ENCODE measurements at regions of chr12 and their contacts with region 1.

Region 1: GRCh38 chr12:8544295-8544694 is 3.6 kb upstream of the CLEC4E start:
- DNase-seq: peak; percentile 76
- H3K4me3 Mint-ChIP-seq: no peak overlapping the region
- H3K27ac Mint-ChIP-seq: no peak overlapping the region
- H3K4me1 Mint-ChIP-seq: peaks cover 10% of the 10 kb centered on the region
- H3K27me3 Mint-ChIP-seq: peaks cover 30% of the 10 kb centered on the region
- CTCF ChIP-seq: peak; percentile 83

Region 2: DNA sequence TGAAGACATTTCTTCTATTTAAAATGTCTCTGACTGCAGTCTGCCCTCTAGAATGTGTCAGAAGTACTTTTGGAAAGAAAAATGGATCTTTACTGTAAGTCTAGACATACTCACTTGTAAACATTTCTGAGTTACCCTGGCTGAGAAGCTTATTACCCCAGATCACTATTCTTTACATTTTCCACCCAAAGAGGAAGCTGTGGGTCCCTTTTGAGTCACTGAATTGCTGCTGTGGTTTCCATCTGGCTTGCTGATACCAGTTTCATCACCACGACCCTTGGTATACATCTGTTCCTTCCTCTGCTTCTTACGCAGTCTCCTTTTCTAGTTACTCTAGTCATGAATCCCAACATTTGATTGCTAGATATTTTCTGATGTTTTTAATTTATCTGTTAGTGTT is 51.2 kb before region 1 on chr12:
- CTCF ChIA-PET with region 1: no interaction called
- intact Hi-C with region 1: no loop called
- DNase-seq: no peak
- H3K4me3 Mint-ChIP-seq: no peak overlapping the region
- H3K27ac Mint-ChIP-seq: no peak overlapping the region
- H3K4me1 Mint-ChIP-seq: no peaks in the 10 kb centered on the region
- H3K27me3 Mint-ChIP-seq: peaks cover 27% of the 10 kb centered on the region
- CTCF ChIP-seq: no peak

Region 3: DNA sequence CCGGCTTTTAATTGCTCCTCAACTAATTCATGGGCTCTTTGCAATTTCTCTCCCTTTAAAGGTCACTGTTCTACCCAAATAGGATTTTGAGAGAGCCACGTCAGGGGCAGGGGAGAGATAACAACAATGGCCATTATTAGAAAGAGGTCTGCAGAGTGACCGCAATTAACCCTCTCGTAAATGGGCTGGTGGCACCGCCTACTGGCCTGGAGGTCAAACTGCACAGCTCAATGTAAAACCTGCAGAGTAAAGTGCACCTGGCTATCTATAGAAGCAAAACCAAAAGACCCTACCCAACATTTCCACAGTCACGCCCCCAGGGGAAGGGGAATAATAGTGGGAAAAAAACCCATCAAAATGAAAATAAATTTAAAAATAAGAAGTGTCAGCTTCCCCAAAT is 18.0 kb after region 1 on chr12:
- CTCF ChIA-PET with region 1: no interaction called
- intact Hi-C with region 1: no loop called
- DNase-seq: no peak
- H3K4me3 Mint-ChIP-seq: no peak overlapping the region
- H3K27ac Mint-ChIP-seq: no peak overlapping the region
- H3K4me1 Mint-ChIP-seq: no peaks in the 10 kb centered on the region
- H3K27me3 Mint-ChIP-seq: peaks cover 12% of the 10 kb centered on the region
- CTCF ChIP-seq: no peak

Region 4: GRCh38 chr12:8609061-8609570 is 64.8 kb after region 1 on chr12:
- CTCF ChIA-PET with region 1: interaction called, 31 read pairs
- intact Hi-C with region 1: loop called (anchors 1 kb)
- DNase-seq: peak; percentile 39
- H3K4me3 Mint-ChIP-seq: no peak overlapping the region
- H3K27ac Mint-ChIP-seq: no peak overlapping the region
- H3K4me1 Mint-ChIP-seq: peaks cover 13% of the 10 kb centered on the region
- H3K27me3 Mint-ChIP-seq: peaks cover 18% of the 10 kb centered on the region
- CTCF ChIP-seq: peak; percentile 54

Region 5: GRCh38 chr12:8770499-8770898 is 226.2 kb after region 1 on chr12:
- CTCF ChIA-PET with region 1: no interaction called
- intact Hi-C with region 1: no loop called
- DNase-seq: no peak
- H3K4me3 Mint-ChIP-seq: no peak overlapping the region
- H3K27ac Mint-ChIP-seq: no peak overlapping the region
- H3K4me1 Mint-ChIP-seq: no peaks in the 10 kb centered on the region
- H3K27me3 Mint-ChIP-seq: no peaks in the 10 kb centered on the region
- CTCF ChIP-seq: no peak

Measured in Calu3 (cell line).